ENCODE measurements at regions of chr10 and their contacts with region 1.

Region 1: DNA sequence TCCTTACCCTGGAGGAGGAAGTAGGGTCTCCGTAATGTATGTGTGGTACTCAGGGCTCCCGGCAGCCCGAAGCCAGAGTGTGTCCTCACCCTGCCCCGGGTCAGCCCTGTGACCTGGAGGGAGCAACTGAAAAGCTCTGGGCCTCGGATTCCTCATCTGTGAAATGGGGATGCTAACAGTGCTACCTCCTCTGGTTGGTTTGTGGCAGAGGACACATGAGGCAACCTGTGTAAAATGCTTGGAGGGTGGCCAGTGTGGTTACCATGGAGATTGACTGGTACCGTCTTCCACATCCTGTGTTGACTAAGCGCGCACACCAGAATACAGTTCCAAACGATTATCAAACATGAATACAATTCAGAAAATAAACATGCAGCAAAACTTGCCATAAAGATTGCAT is 163.8 kb upstream of the KLF6 start:
- DNase-seq: peak; percentile 83
- H3K4me3 Mint-ChIP-seq: peak overlapping the region; percentile 32
- H3K27ac Mint-ChIP-seq: peak overlapping the region; percentile 87
- H3K4me1 Mint-ChIP-seq: peaks cover 79% of the 10 kb centered on the region
- H3K27me3 Mint-ChIP-seq: no peaks in the 10 kb centered on the region

Region 2: DNA sequence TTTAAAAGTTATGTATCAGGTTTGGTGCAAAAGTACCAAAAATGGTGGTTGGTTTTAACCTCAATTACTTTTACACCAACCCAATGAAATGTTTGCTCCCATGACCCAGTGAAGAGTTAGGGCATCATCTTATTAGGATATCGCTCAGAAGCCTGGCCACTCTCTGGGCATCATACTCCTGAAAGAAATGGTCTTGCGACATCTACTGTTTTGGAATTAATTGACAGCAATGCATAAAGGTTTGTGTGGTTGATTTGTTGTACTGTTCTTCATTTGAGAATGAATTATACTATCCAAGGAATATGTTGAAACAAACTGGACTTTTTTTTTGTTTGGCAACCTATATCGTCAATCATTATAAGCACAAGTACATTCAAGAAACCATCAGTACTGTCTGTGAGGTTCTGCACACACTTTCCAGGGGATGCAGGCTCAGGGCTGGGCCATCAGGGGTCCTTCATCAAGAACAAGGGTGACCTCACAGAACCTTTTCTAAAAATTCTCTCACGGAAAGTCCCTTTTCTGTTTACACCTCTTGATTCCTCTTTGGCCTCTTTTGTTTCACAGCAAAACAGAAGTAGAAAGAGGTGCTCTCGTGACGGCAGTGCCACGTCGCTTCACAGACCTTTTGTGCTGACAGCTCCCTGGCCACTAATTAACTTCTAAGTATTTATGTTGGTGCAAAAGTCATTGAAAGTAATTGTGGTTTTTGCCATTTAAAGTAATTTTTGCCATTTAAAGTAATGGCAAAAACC is 46.6 kb before region 1 on chr10:
- CTCF ChIA-PET with region 1: no interaction called
- DNase-seq: no peak
- H3K4me3 Mint-ChIP-seq: no peak overlapping the region
- H3K27ac Mint-ChIP-seq: no peak overlapping the region
- H3K4me1 Mint-ChIP-seq: peaks cover 13% of the 10 kb centered on the region
- H3K27me3 Mint-ChIP-seq: no peaks in the 10 kb centered on the region

Region 3: DNA sequence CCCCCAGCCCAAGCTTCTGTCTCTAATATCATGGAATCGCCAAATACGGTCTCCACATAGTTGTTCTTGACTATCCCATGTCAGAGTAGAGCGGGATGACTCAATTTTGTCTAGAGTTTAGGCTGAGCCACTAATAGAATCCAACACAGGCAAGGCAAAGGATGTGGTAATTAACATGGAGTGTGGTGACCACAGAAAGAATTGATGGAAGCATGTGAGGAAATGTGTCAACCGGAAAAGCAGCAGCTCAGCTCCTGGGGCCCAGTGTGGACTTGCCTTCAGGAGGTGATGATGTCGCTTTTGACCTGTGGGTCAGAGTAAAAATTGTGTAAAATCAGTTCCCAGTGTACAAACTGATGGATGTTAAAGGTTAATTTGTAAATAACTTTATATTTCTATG is 24.5 kb before region 1 on chr10:
- CTCF ChIA-PET with region 1: no interaction called
- DNase-seq: no peak
- H3K4me3 Mint-ChIP-seq: no peak overlapping the region
- H3K27ac Mint-ChIP-seq: no peak overlapping the region
- H3K4me1 Mint-ChIP-seq: no peaks in the 10 kb centered on the region
- H3K27me3 Mint-ChIP-seq: no peaks in the 10 kb centered on the region

Region 4: DNA sequence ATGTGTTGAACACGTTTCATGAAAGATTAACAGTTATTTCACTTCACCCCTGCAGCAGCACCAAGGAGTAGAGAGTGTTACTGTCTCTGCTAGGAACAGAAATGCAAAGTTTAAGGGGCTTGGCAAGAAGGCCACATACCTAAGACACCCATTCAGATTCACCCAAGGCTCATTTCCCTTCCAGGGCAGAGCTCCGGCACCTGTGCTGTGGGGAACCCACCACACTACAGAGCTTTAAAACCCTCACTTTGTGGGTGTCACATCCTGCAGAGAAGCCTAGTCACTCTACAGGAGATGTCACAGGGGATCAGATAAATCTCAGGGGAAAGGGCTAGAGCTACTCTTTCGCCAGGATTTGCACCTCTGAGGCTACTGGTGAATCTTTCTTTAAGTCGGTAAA is 12.2 kb after region 1 on chr10:
- CTCF ChIA-PET with region 1: interaction called, 13 read pairs
- DNase-seq: peak; percentile 76
- H3K4me3 Mint-ChIP-seq: peak overlapping the region; percentile 24
- H3K27ac Mint-ChIP-seq: peak overlapping the region; percentile 88
- H3K4me1 Mint-ChIP-seq: peaks cover 52% of the 10 kb centered on the region
- H3K27me3 Mint-ChIP-seq: no peaks in the 10 kb centered on the region

Region 5: DNA sequence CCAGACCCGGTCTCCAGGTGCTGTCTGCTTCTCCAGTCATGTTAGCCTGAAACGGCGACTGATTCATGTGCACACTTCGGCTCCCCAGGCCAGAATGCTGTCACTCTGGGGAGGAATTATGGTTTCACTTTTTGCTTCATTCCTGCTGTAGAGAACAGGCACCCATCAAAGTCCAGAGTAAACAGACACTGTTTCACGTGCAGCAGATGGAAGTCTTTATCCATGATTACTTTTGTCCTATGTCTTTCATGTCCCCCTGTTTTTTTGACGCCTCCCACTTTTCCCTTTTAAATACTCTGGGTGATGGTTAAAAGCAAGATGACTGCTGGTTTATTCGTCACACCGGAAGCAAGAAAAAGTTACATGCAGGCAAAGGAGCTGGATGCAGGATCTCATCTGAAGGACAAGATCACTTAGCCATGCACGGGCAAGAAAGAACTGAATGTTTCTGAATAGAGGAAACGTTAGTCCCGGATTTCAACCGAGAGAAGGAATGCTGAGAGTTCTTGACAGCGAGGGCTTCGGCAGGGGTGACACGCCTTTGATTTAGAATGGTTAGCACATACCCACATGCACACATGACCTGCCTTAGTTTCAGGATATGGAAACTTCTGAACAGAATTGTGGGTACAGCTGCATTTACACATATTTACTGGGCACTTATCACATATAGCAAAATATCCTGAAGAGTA is 86.2 kb after region 1 on chr10:
- CTCF ChIA-PET with region 1: no interaction called
- DNase-seq: peak; percentile 49
- H3K4me3 Mint-ChIP-seq: peak overlapping the region; percentile 52
- H3K27ac Mint-ChIP-seq: peak overlapping the region; percentile 87
- H3K4me1 Mint-ChIP-seq: peaks cover 38% of the 10 kb centered on the region
- H3K27me3 Mint-ChIP-seq: no peaks in the 10 kb centered on the region

Region 6: DNA sequence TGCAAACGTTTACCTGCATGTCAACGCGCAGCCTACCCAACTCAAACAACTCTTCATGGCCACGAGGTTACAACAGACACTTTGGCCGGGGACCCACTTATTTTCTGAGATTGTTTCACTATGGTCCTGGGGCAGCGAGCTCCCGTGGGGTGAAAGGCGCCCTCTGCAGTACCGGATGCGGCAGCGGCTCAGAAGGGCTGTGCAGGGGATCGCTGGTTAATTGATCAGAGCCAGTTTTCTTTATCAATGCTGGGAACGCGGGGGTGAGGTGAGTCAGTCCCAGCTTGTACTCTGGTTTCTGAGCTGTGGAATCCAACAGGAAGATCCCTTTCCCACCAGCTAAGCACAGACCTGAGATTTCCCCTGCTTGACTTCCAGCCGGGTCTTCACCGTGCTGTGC is 202.6 kb after region 1 on chr10:
- CTCF ChIA-PET with region 1: no interaction called
- DNase-seq: no peak
- H3K4me3 Mint-ChIP-seq: no peak overlapping the region
- H3K27ac Mint-ChIP-seq: no peak overlapping the region
- H3K4me1 Mint-ChIP-seq: peaks cover 18% of the 10 kb centered on the region
- H3K27me3 Mint-ChIP-seq: peaks cover 11% of the 10 kb centered on the region